ENCODE measurements at regions of chr10 and their contacts with region 1.

Region 1: DNA sequence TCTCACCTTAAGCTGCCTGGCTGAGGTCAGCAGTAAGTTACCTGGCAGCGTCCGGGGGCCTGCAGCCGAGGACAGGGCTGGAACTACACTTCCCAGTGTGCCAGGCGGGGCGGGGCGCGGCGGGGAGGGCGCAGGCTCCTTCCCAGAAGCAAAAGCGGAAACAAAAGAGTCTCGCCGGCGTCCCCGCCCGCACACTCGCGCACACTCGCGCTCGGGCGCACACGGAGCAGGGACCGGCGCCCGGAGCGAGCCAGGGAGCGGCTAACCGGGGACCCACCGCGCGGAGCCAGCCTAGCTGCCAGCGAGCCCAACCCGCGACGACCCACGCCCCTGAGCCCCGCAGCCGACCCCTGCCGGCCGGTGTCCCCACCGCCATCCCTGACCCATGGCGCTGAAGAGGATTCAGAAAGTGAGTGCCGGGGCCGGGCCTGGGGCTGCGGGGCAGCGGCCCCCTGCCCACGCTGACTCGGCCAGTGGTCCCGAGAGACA is at the start of gene UBE2D1:
- DNase-seq: peak; percentile 88
- H3K4me3 Mint-ChIP-seq: peak within 1 kb of the TSS; percentile 96
- H3K27ac Mint-ChIP-seq: peak within 1 kb of the TSS; percentile 75
- H3K4me1 Mint-ChIP-seq: peaks cover 29% of the 10 kb centered on the region
- H3K27me3 Mint-ChIP-seq: peaks cover 6% of the 10 kb centered on the region
- total RNA-seq, gene UBE2D1: 14.5 to 14.8 TPM

Region 2: GRCh38 chr10:58360391-58361004 is 25.6 kb after region 1 on chr10:
- CTCF ChIA-PET with region 1: no interaction called
- POLR2A ChIA-PET with region 1: no interaction called
- intact Hi-C with region 1: loop called (anchors 2 kb)
- DNase-seq: no peak
- H3K4me3 Mint-ChIP-seq: no peak overlapping the region
- H3K27ac Mint-ChIP-seq: no peak overlapping the region
- H3K4me1 Mint-ChIP-seq: peaks cover 25% of the 10 kb centered on the region
- H3K27me3 Mint-ChIP-seq: no peaks in the 10 kb centered on the region